ENCODE measurements at regions of chr13 and their contacts with region 1.

Region 1: DNA sequence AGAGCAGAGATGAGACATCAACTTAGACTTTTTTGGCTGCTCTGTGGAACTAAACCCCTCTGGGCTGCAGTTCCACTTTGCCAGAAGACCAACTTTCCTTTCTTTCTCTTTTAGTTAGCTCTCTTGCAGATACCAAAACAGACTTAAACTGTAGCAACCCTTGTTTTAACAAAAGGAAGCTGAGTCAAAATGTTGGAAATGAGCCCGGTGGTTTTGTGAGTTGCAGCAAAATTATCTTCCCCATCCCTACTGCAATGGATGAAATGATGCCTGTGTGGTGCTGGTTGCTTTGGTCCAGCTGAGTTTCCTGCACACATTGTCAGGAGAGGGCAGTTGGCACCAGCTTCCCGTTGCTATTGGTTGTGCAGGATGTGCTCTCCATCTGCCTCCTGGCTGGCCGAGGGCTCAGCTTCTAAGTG is 115.3 kb downstream of the LRCH1 start:
- DNase-seq: no peak
- ATAC-seq: peak; percentile 26
- H3K4me3 ChIP-seq: peak overlapping the region; percentile 36 to 69 (median 58)
- H3K4me3 Mint-ChIP-seq: peak overlapping the region; percentile 87
- H3K27ac ChIP-seq: peak overlapping the region; percentile 81 to 89
- H3K27ac Mint-ChIP-seq: peak overlapping the region; percentile 82
- H3K4me1 ChIP-seq: peaks cover 41 to 42% of the 10 kb centered on the region in 2 donors
- H3K4me1 Mint-ChIP-seq: peaks cover 68% of the 10 kb centered on the region
- H3K27me3 ChIP-seq: no peaks in the 10 kb centered on the region
- H3K27me3 Mint-ChIP-seq: no peaks in the 10 kb centered on the region
- CTCF ChIP-seq: no peak

Region 2: DNA sequence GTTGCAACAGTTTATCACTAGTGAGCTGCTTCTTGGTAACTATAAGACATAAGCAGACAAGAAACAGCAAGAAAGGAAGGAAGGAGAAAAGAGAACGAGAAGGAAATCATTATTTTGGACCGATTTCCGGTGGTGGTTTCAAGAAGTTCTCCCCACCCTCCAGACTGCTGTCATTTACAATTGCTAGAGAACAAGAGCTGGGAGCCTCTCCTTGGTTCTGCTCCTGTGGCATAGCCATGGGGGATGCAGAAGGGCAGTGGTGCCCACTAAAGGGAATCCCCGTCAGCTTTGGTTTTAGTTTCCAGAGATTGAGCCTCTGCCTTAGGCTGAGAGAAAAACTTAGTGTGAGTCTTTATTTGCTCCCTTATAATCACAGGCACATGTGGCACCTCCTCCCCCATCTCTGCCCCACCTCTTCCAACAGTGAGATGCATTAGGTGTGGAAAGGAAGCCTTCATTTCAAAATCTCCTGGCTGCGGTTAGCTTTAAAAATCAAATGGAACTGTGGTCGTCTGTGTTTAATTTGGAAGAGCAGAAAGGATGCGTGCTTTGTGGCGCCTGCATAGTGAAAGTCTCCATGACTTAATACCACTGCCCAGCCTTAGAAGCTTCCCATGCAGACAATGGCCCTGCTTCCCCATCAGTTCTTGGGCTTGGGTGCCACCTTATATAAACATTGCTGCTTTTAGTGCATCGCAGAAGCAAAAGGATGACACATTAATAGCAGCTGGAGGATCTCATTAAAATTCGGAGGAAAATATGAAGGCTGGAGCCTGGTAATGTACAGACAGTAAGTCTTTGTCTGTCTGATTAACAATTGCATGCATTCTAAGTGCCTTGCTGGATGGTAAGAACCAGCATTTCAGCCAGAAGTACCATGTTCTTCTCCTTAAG is 90.4 kb before region 1 on chr13:
- CTCF ChIA-PET with region 1: no interaction called
- POLR2A ChIA-PET with region 1: no interaction called
- intact Hi-C with region 1: loop called (anchors 5 kb)
- DNase-seq: peak; percentile 47
- ATAC-seq: peak; percentile 25
- H3K4me3 ChIP-seq: peak overlapping the region in 1 of 5 experiments; percentile 45
- H3K4me3 Mint-ChIP-seq: peak overlapping the region; percentile 61
- H3K27ac ChIP-seq: peak overlapping the region; percentile 43 to 68
- H3K27ac Mint-ChIP-seq: peak overlapping the region; percentile 73
- H3K4me1 ChIP-seq: peaks cover 72 to 75% of the 10 kb centered on the region in 2 donors
- H3K4me1 Mint-ChIP-seq: peaks cover 86% of the 10 kb centered on the region
- H3K27me3 ChIP-seq: no peaks in the 10 kb centered on the region
- H3K27me3 Mint-ChIP-seq: no peaks in the 10 kb centered on the region
- CTCF ChIP-seq: no peak

Region 3: GRCh38 chr13:46648166-46648635 is 20.1 kb before region 1 on chr13:
- CTCF ChIA-PET with region 1: interaction called, 3 read pairs
- POLR2A ChIA-PET with region 1: no interaction called
- intact Hi-C with region 1: loop called (anchors 2 kb)
- DNase-seq: peak; percentile 56
- ATAC-seq: peak; percentile 83
- H3K4me3 ChIP-seq: no peak overlapping the region
- H3K4me3 Mint-ChIP-seq: peak overlapping the region; percentile 35
- H3K27ac ChIP-seq: no peak overlapping the region
- H3K27ac Mint-ChIP-seq: peak overlapping the region; percentile 51
- H3K4me1 ChIP-seq: peaks cover 20 to 36% of the 10 kb centered on the region in 2 donors
- H3K4me1 Mint-ChIP-seq: peaks cover 69% of the 10 kb centered on the region
- H3K27me3 ChIP-seq: no peaks in the 10 kb centered on the region
- H3K27me3 Mint-ChIP-seq: no peaks in the 10 kb centered on the region
- CTCF ChIP-seq: no peak

Region 4: GRCh38 chr13:46679369-46680120 is 11.2 kb after region 1 on chr13:
- CTCF ChIA-PET with region 1: interaction called, 3 read pairs
- POLR2A ChIA-PET with region 1: no interaction called
- intact Hi-C with region 1: loop called (anchors 1 kb)
- DNase-seq: peak; percentile 78
- ATAC-seq: peak; percentile 89
- H3K4me3 ChIP-seq: peak overlapping the region in 4 of 5 experiments; percentile 23 to 63 (median 44)
- H3K4me3 Mint-ChIP-seq: no peak overlapping the region
- H3K27ac ChIP-seq: peak overlapping the region; percentile 79 to 81
- H3K27ac Mint-ChIP-seq: no peak overlapping the region
- H3K4me1 ChIP-seq: peaks cover 23 to 27% of the 10 kb centered on the region in 2 donors
- H3K4me1 Mint-ChIP-seq: peaks cover 26% of the 10 kb centered on the region
- H3K27me3 ChIP-seq: no peaks in the 10 kb centered on the region
- H3K27me3 Mint-ChIP-seq: no peaks in the 10 kb centered on the region
- CTCF ChIP-seq: peak; percentile 43